PC-9 (cell line): ENCODE measurements at regions of chr2 and their contacts with region 1.

Region 1: DNA sequence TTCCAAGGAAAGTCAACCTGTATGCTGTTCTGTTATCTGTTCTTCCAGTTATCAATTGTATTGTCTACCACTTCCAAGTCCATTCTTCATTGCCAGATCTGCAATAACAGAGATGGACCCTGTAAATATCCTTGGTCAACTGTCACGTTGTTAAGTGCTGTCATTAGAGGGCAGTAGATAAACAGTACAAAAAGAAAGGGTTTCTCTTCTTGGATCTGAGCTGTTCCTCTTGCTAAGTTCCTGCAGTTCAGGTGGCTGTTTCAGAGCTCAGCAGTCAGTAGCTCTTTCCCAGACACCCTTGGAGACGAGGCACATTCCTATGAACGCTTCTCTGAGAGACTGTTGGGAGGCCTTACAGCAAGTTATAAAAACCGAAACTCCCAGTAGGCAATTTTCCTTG is 957.1 kb upstream of the CHAC2 start:
- DNase-seq: peak in 1 of 2 experiments; percentile 5
- H3K4me3 ChIP-seq: no peak overlapping the region
- H3K27ac ChIP-seq: no peak overlapping the region
- H3K4me1 ChIP-seq: no peaks in the 10 kb centered on the region
- H3K27me3 ChIP-seq: no peaks in the 10 kb centered on the region
- CTCF ChIP-seq: peak; percentile 65; the same call in 1 of the 2 replicates

Region 2: GRCh38 chr2:52732849-52733395 is 77.5 kb before region 1 on chr2:
- CTCF ChIA-PET with region 1: no interaction called
- POLR2A ChIA-PET with region 1: no interaction called
- intact Hi-C with region 1: no loop called
- DNase-seq: no peak
- H3K4me3 ChIP-seq: no peak overlapping the region
- H3K27ac ChIP-seq: no peak overlapping the region
- H3K4me1 ChIP-seq: no peaks in the 10 kb centered on the region
- H3K27me3 ChIP-seq: no peaks in the 10 kb centered on the region
- CTCF ChIP-seq: no peak

Region 3: DNA sequence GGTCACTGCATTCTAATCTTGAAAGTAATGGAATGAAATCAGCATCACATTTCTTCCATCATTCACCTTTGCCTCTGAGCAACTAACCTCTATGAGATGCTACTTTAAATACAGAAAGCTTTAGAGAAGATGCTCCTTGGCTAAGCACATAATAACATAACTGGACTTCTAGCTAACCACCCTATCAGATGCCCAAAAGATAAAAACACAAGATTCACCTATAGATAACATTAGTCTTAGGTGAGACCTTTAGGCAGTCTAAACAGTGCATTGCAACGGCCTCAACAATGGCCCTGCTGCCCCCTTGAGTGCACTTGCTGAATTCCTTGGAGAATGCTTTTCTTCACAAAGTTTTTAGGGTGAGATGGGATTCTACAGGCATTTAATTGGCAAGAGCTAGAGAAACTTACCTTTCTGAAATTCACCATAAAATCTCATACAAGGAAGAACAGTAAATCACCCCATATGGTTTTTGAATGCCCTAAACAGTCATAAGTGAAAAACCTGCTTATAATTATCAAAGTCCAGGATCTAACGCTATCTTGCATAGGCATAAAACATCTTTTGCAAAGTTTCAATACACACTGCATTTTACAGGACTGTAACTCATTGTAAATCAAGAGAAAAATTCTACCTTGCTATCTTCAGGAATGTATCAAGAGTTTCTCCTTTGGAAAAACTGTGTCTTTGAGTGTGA is 165.9 kb after region 1 on chr2:
- CTCF ChIA-PET with region 1: no interaction called
- POLR2A ChIA-PET with region 1: no interaction called
- intact Hi-C with region 1: loop called (anchors 5 kb)
- DNase-seq: peak; percentile 23 to 38
- H3K4me3 ChIP-seq: no peak overlapping the region
- H3K27ac ChIP-seq: no peak overlapping the region
- H3K4me1 ChIP-seq: no peaks in the 10 kb centered on the region
- H3K27me3 ChIP-seq: no peaks in the 10 kb centered on the region
- CTCF ChIP-seq: peak; percentile 85

Region 4: GRCh38 chr2:53268086-53268485 is 457.6 kb after region 1 on chr2:
- CTCF ChIA-PET with region 1: no interaction called
- POLR2A ChIA-PET with region 1: no interaction called
- intact Hi-C with region 1: loop called (anchors 5 kb)
- DNase-seq: peak in 1 of 2 experiments; percentile 10
- H3K4me3 ChIP-seq: no peak overlapping the region
- H3K27ac ChIP-seq: no peak overlapping the region
- H3K4me1 ChIP-seq: peaks cover 3% of the 10 kb centered on the region
- H3K27me3 ChIP-seq: no peaks in the 10 kb centered on the region
- CTCF ChIP-seq: peak; percentile 30; the same call in 1 of the 2 replicates